ENCODE measurements at regions of chr1 and their contacts with region 1.

Region 1: DNA sequence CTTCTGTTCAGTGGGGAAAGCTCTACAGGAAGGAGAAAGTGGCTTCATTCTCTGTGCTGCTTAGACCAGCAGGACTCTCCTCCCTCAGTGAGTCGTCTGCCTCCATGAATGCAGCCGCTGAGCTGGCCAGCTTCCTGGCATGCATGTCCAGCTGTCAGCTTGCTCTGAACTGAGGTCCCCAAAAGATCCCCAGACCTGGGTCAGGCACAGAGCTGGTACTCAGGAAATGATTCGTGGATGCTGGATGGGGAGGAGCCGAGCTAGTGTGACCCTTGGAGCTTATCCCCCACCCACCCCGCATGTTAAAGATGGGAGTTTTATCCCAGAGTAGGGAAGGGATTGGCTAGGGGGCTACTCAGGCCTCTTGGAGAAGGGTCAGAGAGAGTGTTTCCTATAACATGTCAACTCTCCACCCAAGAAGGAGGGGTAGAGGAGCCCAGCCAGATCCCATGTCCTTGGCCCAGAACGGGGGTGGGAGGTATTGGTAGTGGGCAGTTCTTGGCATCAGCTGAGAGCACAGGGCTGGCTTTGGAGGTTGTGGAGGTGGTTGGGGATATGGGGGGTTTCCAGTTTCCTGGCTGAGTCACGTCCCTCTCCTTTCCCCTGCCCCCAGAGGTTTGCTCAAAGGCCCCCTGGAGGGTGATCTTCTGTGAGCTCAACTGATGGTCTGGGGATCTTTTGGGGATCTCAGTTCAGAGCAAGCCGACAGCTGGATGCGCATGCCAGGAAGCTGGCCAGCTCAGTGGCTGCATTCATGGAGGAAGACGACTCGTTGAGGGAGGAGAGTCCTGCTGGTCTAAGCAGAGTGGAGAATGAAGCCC is 110.1 kb downstream of the FOXD2 start:
- DNase-seq: no peak
- ATAC-seq: peak; percentile 60
- H3K4me3 Mint-ChIP-seq: no peak overlapping the region
- H3K27ac Mint-ChIP-seq: no peak overlapping the region; the same call in 1 of the 2 replicates
- H3K4me1 Mint-ChIP-seq: peaks cover 28% of the 10 kb centered on the region
- H3K27me3 Mint-ChIP-seq: peaks cover 14% of the 10 kb centered on the region
- CTCF ChIP-seq: no peak

Region 2: DNA sequence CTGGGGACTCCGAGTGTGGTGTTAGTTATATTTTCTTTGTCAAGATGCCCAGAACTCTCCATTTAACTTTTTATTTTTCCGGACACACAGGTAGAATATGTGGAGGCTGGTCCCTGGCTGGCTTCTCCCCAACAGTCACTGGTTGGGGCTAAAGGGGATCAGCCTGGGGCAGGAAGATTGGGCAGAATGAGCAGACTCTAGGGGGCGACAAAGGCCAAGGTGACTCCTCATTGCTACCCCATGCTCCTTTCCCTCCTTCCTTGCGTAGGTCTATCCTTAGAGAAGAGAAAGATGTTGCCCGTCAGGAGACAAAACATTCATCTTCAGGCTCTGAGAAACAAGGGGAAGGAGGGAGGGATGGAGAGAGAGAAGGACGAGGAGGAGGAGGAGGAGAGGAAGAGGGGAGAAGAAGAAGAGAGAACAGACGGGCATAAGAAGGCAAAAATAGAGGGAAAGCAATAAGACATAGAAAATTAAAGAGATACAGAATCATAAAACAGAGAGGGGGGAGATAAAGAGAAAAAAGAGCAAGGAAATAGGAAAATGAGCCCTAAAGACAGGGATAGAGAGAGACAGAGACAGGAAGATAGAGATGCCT is 20.2 kb before region 1 on chr1:
- CTCF ChIA-PET with region 1: interaction called, 25 read pairs
- POLR2A ChIA-PET with region 1: no interaction called
- DNase-seq: peak; percentile 74
- ATAC-seq: peak; percentile 72
- H3K4me3 Mint-ChIP-seq: no peak overlapping the region
- H3K27ac Mint-ChIP-seq: no peak overlapping the region
- H3K4me1 Mint-ChIP-seq: peaks cover 37% of the 10 kb centered on the region
- H3K27me3 Mint-ChIP-seq: peaks cover 36% of the 10 kb centered on the region
- CTCF ChIP-seq: peak; percentile 64

Region 3: DNA sequence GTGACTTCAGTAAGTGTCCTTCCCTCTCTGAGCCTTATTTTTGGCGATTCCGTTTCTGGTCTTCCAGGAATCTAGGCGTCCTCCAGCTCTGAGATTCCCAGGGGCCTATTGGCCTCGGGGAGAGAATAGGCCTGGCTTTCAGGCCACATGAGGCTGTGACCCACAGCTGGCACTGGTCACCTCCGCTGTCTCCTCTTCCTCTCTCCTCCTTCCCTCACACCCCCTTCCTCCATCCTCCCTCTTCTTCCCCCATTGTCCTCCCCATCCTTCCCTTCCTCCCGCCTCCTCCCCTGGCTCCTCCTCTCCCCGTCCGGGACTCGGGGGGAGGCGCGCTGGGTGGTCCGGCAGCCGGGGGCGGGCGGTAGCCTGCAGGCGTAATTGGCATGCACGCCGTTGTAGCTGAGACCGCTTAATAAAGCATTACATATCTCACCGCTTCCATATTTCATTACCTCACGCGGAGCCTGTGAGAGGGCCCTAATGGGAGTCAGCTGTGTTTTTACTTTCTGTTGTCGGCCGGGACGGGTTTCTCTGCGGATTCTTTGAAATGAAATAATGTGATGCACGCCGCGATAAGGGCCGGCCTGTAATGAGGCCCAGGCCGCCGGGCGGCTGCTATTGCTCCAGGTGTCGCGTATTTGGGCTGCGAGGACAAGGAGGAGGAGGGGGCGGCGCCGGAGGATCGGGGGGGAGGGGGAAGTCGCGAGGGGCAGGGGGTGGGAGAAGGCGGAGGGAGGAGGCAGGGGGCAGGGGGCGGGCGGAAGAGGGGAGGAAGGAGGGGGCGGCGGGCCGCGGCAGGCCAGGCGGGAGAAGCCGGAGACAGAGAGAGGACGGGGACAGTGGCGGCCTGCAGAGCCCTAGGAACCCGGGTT is 14.8 kb before region 1 on chr1:
- CTCF ChIA-PET with region 1: interaction called, 25 read pairs
- POLR2A ChIA-PET with region 1: no interaction called
- DNase-seq: peak; percentile 73
- ATAC-seq: peak; percentile 76
- H3K4me3 Mint-ChIP-seq: peak overlapping the region; percentile 78
- H3K27ac Mint-ChIP-seq: peak overlapping the region; percentile 80; the same call in 1 of the 2 replicates
- H3K4me1 Mint-ChIP-seq: peaks cover 33% of the 10 kb centered on the region
- H3K27me3 Mint-ChIP-seq: peaks cover 34% of the 10 kb centered on the region
- CTCF ChIP-seq: no peak

Region 4: GRCh38 chr1:47558601-47559593 is 10.9 kb after region 1 on chr1:
- CTCF ChIA-PET with region 1: interaction called, 11 read pairs
- POLR2A ChIA-PET with region 1: no interaction called
- DNase-seq: no peak
- ATAC-seq: no peak
- H3K4me3 Mint-ChIP-seq: no peak overlapping the region
- H3K27ac Mint-ChIP-seq: no peak overlapping the region
- H3K4me1 Mint-ChIP-seq: peaks cover 33% of the 10 kb centered on the region
- H3K27me3 Mint-ChIP-seq: peaks cover 51% of the 10 kb centered on the region
- CTCF ChIP-seq: no peak

Region 5: DNA sequence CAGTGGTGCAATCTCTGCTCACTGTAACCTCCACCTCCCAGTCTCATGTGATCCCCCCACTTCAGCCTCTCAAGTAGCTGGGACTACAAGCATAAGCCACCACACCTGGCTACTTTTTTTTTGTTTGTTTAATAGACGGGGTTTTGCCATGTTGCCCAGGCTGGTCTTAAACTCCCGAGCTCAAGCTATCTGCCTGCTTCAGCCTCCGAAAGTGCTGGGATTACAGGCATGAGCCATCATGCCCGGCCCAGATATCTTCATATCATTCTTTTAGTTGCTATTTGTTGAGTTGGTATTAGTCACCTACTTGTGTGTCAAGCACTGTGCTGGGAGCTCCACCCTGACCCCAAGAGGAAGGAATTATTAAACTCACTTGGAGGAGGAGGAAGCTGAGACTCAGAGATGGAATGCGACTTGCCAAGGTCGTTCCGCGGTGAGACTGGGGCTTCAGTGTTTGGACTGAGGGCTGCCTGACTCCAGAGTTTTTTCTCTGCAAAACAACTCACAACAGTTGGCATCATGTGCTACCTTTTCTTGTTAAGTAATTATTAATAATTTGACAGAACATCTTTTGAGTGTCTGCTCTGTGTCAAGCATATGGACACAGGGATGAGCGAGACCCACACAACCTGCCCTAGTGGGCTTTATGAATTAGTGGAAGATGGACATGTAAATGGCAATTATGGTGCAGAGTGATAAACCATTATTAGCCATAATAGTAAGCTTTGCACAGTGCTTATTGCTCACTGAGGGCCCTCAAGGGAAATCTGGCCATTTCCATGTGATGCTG is 21.9 kb after region 1 on chr1:
- CTCF ChIA-PET with region 1: interaction called, 11 read pairs
- POLR2A ChIA-PET with region 1: no interaction called
- DNase-seq: peak; percentile 51
- ATAC-seq: peak; percentile 84
- H3K4me3 Mint-ChIP-seq: no peak overlapping the region
- H3K27ac Mint-ChIP-seq: no peak overlapping the region
- H3K4me1 Mint-ChIP-seq: peaks cover 55% of the 10 kb centered on the region
- H3K27me3 Mint-ChIP-seq: peaks cover 41% of the 10 kb centered on the region
- CTCF ChIP-seq: no peak

Region 6: DNA sequence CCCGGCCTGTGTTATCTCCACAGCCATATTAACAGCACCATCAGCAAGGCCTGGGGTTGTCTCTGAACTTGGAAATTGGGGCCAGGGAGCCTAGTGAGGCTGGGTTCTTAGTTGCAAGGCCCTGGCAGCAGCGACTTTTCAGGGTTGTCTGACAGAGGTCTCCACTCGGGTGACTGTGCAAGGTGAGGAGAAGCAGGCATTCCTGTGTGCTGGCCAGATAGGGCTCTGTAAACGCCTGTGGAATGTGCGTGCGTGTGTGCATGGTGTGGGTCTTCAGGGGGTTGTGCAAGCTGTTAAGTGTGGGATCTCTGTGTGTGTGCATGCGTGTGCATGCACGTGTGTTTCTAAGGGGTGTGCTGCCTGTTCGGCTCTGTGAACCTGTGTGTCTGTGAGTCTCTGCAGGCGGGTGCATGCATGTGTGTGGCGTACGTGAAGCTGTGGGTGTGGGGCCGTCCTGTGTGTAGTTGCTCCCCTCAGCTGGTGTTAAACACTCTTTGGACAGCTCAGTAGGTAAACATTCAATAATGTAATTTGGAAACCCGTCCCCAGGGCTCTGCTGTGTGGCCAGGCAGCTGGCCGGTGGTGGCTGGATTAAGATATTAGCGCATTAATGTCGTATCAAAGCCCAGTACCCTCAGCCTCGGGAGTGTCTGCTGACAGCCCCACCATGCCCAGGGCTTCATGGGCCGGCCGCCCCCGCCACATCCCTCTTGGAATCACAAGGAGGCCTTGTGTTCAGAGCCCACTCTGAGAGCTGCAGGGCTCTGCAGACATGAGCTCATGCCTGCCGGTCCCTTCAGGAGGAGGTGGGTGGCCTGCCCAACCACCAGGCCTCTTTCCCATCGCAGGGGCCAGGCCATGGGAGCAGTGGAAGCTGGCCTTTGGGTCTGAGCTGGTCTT is 79.8 kb after region 1 on chr1:
- CTCF ChIA-PET with region 1: interaction called, 10 read pairs
- POLR2A ChIA-PET with region 1: no interaction called
- DNase-seq: no peak
- ATAC-seq: no peak
- H3K4me3 Mint-ChIP-seq: no peak overlapping the region
- H3K27ac Mint-ChIP-seq: no peak overlapping the region
- H3K4me1 Mint-ChIP-seq: peaks cover 6% of the 10 kb centered on the region
- H3K27me3 Mint-ChIP-seq: peaks cover 9% of the 10 kb centered on the region
- CTCF ChIP-seq: no peak

Region 7: GRCh38 chr1:47710329-47711071 is 162.5 kb after region 1 on chr1:
- CTCF ChIA-PET with region 1: interaction called, 15 read pairs
- POLR2A ChIA-PET with region 1: no interaction called
- DNase-seq: peak; percentile 86
- ATAC-seq: peak; percentile 56
- H3K4me3 Mint-ChIP-seq: peak overlapping the region; percentile 64
- H3K27ac Mint-ChIP-seq: no peak overlapping the region
- H3K4me1 Mint-ChIP-seq: peaks cover 29% of the 10 kb centered on the region
- H3K27me3 Mint-ChIP-seq: peaks cover 99% of the 10 kb centered on the region
- CTCF ChIP-seq: peak; percentile 97